Left cardiac atrium (tissue), 4 donors: ENCODE measurements at regions of chr16 and their contacts with region 1.

Region 1: DNA sequence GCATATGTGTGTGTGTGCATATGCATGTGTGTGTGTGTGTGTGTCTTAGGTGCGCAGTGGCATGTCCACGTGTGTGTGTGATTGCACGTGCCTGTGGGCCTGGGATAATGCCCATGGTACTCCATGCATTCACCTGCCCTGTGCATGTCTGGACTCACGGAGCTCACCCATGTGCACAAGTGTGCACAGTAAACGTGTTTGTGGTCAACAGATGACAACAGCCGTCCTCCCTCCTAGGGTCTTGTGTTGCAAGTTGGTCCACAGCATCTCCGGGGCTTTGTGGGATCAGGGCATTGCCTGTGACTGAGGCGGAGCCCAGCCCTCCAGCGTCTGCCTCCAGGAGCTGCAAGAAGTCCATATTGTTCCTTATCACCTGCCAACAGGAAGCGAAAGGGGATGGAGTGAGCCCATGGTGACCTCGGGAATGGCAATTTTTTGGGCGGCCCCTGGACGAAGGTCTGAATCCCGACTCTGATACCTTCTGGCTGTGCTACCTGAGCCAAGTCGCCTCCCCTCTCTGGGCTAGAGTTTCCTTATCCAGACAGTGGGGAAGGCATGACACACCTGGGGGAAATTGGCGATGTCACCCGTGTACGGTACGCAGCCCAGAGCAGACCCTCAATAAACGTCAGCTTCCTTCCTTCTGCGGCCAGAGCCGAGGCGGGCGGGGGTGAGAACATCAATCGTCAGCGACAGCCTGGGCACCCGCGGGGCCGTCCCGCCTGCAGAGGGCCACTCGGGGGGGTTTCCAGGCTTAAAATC is 47.6 kb downstream of the IL21R start:
- DNase-seq: no peak
- ATAC-seq: peak in 1 of 2 donors; percentile 64

Region 2: GRCh38 chr16:27222249-27223225 is 227.1 kb before region 1 on chr16:
- intact Hi-C with region 1: loop called in 1 of 2 experiments (anchors 10 kb)
- DNase-seq: peak; percentile 63
- ATAC-seq: peak; percentile 72